Dendritic cell treated with granulocyte-macrophage colony-stimulating factor and Interleukin-4, amounts not matched to agents 40 ng/mL and 50 ng/mL, for 4 days (primary cell): ENCODE measurements at regions of chr6 and their contacts with region 1.

Region 1: GRCh38 chr6:68533339-68533795 is 101.7 kb upstream of the ADGRB3 start:
- H3K4me3 Mint-ChIP-seq: no peak overlapping the region
- H3K27ac Mint-ChIP-seq: no peak overlapping the region
- H3K4me1 Mint-ChIP-seq: no peaks in the 10 kb centered on the region
- H3K27me3 Mint-ChIP-seq: no peaks in the 10 kb centered on the region

Region 2: DNA sequence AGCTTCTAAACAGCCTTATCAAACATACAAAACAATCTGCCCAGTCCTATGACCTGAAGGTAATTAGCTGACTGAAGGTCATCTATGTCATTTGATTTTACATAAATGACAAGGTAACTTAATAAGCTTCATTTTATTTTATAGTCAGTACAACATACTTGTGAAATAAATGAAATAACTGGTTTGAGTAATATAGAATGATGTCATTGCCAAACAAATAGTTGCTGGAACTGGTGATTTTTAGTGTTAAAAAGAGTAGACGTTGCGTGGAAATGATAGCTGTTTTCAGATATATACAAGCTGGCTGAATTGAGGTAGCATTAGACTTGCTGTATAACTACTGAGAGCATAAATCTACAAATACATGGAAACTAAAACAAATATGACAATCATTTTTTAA is 16.6 kb before region 1 on chr6:
- intact Hi-C with region 1: loop called (anchors 1 kb)
- H3K4me3 Mint-ChIP-seq: no peak overlapping the region
- H3K27ac Mint-ChIP-seq: no peak overlapping the region
- H3K4me1 Mint-ChIP-seq: no peaks in the 10 kb centered on the region
- H3K27me3 Mint-ChIP-seq: no peaks in the 10 kb centered on the region

Region 3: GRCh38 chr6:68559070-68559469 is 25.7 kb after region 1 on chr6:
- intact Hi-C with region 1: no loop called
- H3K4me3 Mint-ChIP-seq: no peak overlapping the region
- H3K27ac Mint-ChIP-seq: no peak overlapping the region
- H3K4me1 Mint-ChIP-seq: no peaks in the 10 kb centered on the region
- H3K27me3 Mint-ChIP-seq: no peaks in the 10 kb centered on the region